Mammary epithelial cell (primary cell): ENCODE measurements at regions of chr9 and their contacts with region 1.

Region 1: GRCh38 chr9:13485068-13485596 is 205.6 kb upstream of the MPDZ start:
- DNase-seq: peak; percentile 61
- H3K4me3 ChIP-seq: peak overlapping the region in 1 of 3 experiments; percentile 13
- H3K27ac ChIP-seq: no peak overlapping the region
- H3K4me1 ChIP-seq: peaks cover 27% of the 10 kb centered on the region
- H3K27me3 ChIP-seq: no peaks in the 10 kb centered on the region
- CTCF ChIP-seq: peak; percentile 31 to 45

Region 2: DNA sequence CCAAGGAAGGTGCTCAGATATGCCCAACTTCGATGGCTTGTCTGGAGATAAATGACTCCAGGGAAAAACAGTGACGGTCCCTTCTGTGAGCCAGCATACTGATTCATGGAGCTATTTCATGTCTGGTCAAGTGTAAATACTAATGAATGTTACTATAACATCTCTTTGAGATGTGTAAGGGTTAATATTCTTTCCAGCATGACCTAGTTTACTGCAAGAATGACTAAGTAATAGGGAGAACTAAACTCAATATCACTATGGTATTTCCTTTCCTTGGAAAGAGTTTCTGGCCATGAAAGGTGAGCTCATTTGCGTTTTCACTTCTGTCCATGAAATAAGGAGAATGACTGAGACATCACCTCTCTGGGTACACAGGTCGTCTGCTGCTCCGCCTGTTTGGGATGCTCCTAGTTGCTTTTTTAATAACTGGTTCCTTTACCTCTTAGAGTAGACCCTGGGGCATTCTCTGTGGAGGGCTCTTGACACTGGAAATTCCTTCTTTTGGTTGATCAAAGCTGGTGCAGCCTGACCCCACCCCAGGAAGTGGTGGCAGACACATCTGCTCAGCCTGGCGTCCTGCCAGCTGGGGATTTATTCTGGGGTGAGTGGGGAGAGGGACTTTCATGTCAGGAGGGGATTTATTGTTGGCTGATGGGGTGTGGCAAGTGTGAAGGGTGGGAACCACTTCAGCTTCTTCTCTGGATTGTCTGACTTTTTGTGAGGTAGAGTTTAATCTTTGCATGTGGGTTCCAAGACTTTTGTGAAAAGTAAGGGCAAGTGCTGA is 44.4 kb after region 1 on chr9:
- CTCF ChIA-PET with region 1: no interaction called
- dilution Hi-C with region 1: no loop called
- in situ Hi-C with region 1: no loop called
- intact Hi-C with region 1: loop called (anchors 5 kb)
- DNase-seq: peak; percentile 76
- H3K4me3 ChIP-seq: no peak overlapping the region
- H3K27ac ChIP-seq: no peak overlapping the region
- H3K4me1 ChIP-seq: peaks cover 18% of the 10 kb centered on the region
- H3K27me3 ChIP-seq: no peaks in the 10 kb centered on the region
- CTCF ChIP-seq: no peak